B cell (primary cell): ENCODE measurements at regions of chr11 and their contacts with region 1.

Region 1: GRCh38 chr11:14643697-14644225 is at the start of gene PDE3B:
- DNase-seq: peak; percentile 72
- ATAC-seq: peak; percentile 74
- H3K4me3 ChIP-seq: peak within 1 kb of the TSS; percentile 58 to 92 (median 73)
- H3K4me3 Mint-ChIP-seq: peak within 1 kb of the TSS; percentile 92
- H3K27ac ChIP-seq: peak within 1 kb of the TSS in 1 of 2 donors; percentile 38
- H3K27ac Mint-ChIP-seq: peak within 1 kb of the TSS; percentile 64
- H3K4me1 ChIP-seq: peaks cover 7 to 17% of the 10 kb centered on the region in 2 donors
- H3K4me1 Mint-ChIP-seq: peaks cover 9% of the 10 kb centered on the region
- H3K27me3 ChIP-seq: peaks cover 0 to 29% (median 14%) of the 10 kb centered on the region in 4 experiments
- H3K27me3 Mint-ChIP-seq: peaks cover 40% of the 10 kb centered on the region
- CTCF ChIP-seq: peak; percentile 3
- total RNA-seq, gene PDE3B: 60.7 and 70.7 TPM in 2 replicates

Region 2: GRCh38 chr11:14578541-14578956 is 65.2 kb before region 1 on chr11:
- CTCF ChIA-PET with region 1: interaction called, 18 read pairs
- POLR2A ChIA-PET with region 1: interaction called, 4 read pairs
- intact Hi-C with region 1: loop called (anchors 1 kb)
- DNase-seq: peak; percentile 90
- ATAC-seq: peak; percentile 99
- H3K4me3 ChIP-seq: peak overlapping the region in 1 of 5 experiments; percentile 18
- H3K4me3 Mint-ChIP-seq: peak overlapping the region; percentile 51
- H3K27ac ChIP-seq: peak overlapping the region; percentile 59 to 71
- H3K27ac Mint-ChIP-seq: peak overlapping the region; percentile 85
- H3K4me1 ChIP-seq: peaks cover 13 to 22% of the 10 kb centered on the region in 2 donors
- H3K4me1 Mint-ChIP-seq: peaks cover 37% of the 10 kb centered on the region
- H3K27me3 ChIP-seq: no peaks in the 10 kb centered on the region
- H3K27me3 Mint-ChIP-seq: peaks cover 4% of the 10 kb centered on the region
- CTCF ChIP-seq: no peak

Region 3: GRCh38 chr11:14619603-14620531 is 23.9 kb before region 1 on chr11:
- CTCF ChIA-PET with region 1: interaction called, 13 read pairs
- POLR2A ChIA-PET with region 1: no interaction called
- intact Hi-C with region 1: no loop called
- DNase-seq: no peak
- ATAC-seq: no peak
- H3K4me3 ChIP-seq: no peak overlapping the region
- H3K4me3 Mint-ChIP-seq: no peak overlapping the region
- H3K27ac ChIP-seq: no peak overlapping the region
- H3K27ac Mint-ChIP-seq: no peak overlapping the region
- H3K4me1 ChIP-seq: peaks cover 3% of the 10 kb centered on the region in 2 donors
- H3K4me1 Mint-ChIP-seq: peaks cover 3% of the 10 kb centered on the region
- H3K27me3 ChIP-seq: no peaks in the 10 kb centered on the region
- H3K27me3 Mint-ChIP-seq: peaks cover 3% of the 10 kb centered on the region
- CTCF ChIP-seq: no peak

Region 4: DNA sequence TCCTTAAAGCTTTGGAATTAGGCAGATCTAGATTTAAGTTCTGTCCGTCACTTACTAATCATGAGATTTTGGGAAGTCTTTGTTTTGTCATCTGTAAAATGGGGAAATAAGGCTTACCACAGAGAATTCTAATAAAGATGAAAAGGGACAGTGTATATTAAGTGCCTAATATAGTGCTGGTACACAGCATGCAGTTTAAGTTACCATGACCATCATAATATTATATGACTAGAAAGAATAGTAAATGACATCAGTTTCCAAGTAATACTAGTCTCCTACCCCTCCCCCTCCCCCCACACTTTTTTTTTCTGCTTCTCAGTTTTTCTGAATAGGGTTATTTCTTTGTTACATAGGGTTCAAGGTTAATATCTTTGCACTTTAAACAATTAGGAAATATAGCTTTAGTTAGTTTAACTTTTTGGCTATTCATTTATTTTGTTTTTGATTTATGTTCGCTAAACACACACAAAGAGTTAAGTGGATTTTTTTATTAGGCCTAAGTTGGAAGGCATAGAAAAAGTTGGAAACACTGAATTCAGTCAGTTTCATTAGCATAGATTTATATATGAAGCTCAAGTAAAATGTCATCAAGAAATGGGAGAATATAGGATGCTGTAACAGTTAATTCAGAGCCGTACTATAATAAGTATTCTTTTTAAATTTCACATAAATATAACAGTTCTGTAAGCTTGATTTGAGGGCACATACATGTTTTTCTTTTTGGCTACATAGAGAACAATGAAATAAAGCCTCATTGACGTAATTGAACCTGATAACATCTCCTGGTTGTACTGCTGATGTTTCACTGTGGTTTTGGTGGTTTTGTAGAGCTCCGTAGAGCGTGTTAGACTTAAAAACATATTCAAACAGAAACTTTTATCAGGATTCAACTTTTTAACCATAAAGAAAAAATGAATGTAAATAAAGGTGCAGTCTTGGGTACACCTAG is 121.1 kb after region 1 on chr11:
- CTCF ChIA-PET with region 1: interaction called, 7 read pairs
- POLR2A ChIA-PET with region 1: interaction called, 5 read pairs
- intact Hi-C with region 1: loop called (anchors 2 kb)
- DNase-seq: peak; percentile 81
- ATAC-seq: peak; percentile 88
- H3K4me3 ChIP-seq: peak overlapping the region in 1 of 5 experiments; percentile 0
- H3K4me3 Mint-ChIP-seq: peak overlapping the region; percentile 30
- H3K27ac ChIP-seq: peak overlapping the region; percentile 1 to 8
- H3K27ac Mint-ChIP-seq: peak overlapping the region; percentile 7
- H3K4me1 ChIP-seq: peaks cover 17 to 25% of the 10 kb centered on the region in 2 donors
- H3K4me1 Mint-ChIP-seq: peaks cover 18% of the 10 kb centered on the region
- H3K27me3 ChIP-seq: peaks cover 0 to 6% (median 5%) of the 10 kb centered on the region in 4 experiments
- H3K27me3 Mint-ChIP-seq: no peaks in the 10 kb centered on the region
- CTCF ChIP-seq: no peak